ENCODE measurements at regions of chr2 and their contacts with region 1.

Region 1: DNA sequence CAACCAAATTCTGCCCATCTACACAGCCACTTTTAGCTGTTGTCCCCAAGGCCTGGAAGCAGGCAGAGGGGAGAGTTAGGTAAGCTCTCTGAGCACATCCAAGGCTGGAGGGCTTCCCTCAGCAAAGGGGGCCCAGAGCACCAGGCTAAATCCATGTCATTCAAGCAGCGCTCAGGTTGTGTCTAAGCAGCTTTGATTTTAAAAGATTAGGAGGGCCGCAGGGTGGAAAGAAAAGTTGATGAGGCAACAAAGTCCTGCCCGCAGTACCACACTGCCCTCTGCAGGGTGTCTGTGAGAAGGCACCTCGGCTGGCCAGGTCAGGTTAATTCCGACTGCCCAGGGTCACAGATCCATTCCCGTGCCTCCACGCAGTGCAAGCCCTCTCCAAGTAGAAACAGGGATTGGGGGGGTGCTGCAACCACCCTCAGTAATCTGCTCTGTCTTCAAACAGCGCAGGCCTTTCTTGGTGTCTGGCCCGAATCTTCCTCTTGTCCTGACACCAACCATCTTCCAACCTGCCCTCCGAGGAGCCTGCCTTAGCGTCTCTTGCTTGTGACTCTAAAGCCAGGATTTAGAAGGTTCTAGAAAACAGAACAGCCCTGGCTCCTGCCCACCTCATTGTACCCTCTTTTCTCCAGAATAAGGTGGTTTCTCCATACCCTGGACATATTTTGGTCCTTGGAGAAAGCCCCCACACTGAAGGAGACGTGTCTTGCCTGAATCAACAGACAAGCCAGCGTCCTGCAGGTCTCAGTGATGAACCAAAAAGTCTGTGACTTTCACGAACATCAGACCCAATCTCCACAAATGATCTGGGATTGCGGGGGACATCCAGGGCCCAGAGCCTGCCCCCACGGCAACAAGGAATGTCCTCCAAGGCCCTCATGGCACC is 289.2 kb downstream of the TNS1 start:
- DNase-seq: peak; percentile 42 to 76 (median 60)
- ATAC-seq: peak; percentile 80
- H3K4me3 ChIP-seq: no peak overlapping the region
- H3K4me3 Mint-ChIP-seq: no peak overlapping the region
- H3K27ac ChIP-seq: no peak overlapping the region
- H3K27ac Mint-ChIP-seq: no peak overlapping the region
- H3K4me1 ChIP-seq: peaks cover 11% of the 10 kb centered on the region
- H3K4me1 Mint-ChIP-seq: peaks cover 6% of the 10 kb centered on the region
- H3K27me3 ChIP-seq: no peaks in the 10 kb centered on the region
- H3K27me3 Mint-ChIP-seq: no peaks in the 10 kb centered on the region
- CTCF ChIP-seq: peak; percentile 98

Region 2: DNA sequence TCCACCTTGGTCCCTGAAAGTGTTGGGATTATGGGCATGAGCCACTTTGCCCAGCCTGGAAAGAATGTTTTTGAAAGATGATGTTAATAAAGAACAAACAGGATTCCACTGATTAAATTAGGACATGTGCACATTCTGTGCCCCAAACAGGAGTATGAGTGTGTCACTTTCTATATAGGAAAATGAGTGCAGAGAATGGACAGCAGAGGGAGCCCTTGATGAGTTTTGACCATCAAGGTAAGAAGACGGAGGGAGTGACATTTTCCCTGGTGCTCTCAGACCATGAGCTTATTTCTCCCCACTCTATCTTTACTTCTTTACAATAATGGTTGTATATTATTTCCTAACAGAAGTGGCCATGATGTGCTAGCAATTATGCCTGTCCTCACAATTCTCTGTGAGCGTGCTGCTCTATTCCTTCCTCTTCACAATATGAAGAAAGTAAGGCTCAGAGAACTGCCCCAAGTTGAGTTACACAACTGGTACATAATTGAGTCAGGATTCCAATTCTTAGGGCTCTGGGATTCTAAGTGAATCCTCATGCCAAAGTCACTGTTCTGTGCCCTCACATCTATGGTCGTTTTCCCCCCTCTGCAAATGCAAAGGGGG is 1194.4 kb before region 1 on chr2:
- CTCF ChIA-PET with region 1: interaction called, 4 read pairs
- POLR2A ChIA-PET with region 1: no interaction called
- intact Hi-C with region 1: loop called (anchors 1 to 5 kb)
- DNase-seq: peak in 9 of 14 experiments; percentile 5 to 70 (median 28)
- ATAC-seq: no peak
- H3K4me3 ChIP-seq: no peak overlapping the region
- H3K4me3 Mint-ChIP-seq: no peak overlapping the region
- H3K27ac ChIP-seq: no peak overlapping the region
- H3K27ac Mint-ChIP-seq: no peak overlapping the region
- H3K4me1 ChIP-seq: no peaks in the 10 kb centered on the region
- H3K4me1 Mint-ChIP-seq: no peaks in the 10 kb centered on the region
- H3K27me3 ChIP-seq: no peaks in the 10 kb centered on the region
- H3K27me3 Mint-ChIP-seq: no peaks in the 10 kb centered on the region
- CTCF ChIP-seq: peak; percentile 70

Region 3: DNA sequence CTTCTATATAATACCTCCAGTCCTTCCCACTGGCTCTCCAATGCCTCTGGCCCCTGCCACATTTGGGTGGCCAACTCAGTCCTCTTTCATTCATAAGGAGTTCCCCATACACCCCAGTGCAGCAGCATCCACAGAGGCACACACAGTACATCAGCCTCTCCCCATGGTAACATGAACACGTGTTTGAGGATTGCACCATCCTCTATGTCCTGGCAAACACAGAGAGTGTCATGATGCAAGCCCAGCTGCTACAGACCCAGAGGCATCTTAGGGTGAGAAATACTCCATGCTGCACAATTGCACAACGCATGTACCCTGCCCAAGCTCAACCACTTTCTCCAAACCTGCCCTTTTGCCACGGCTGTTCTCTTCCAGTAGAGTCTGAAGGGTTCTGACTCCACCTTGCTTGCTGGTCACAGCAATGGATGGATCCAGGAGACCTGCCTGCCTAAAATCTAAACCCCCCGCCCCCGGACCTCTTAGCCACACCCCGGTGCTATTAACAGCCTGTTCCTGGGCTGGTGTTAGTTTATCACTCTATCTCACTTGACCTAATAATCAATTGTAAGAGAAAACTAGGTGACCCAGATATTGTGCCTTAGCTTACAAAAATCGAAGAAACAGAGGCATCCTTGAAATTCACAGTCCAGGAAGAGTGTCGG is 1029.7 kb before region 1 on chr2:
- CTCF ChIA-PET with region 1: interaction called, 4 read pairs
- POLR2A ChIA-PET with region 1: no interaction called
- intact Hi-C with region 1: loop called (anchors 1 kb)
- DNase-seq: peak in 2 of 14 experiments; percentile 38 to 45
- ATAC-seq: no peak
- H3K4me3 ChIP-seq: no peak overlapping the region
- H3K4me3 Mint-ChIP-seq: no peak overlapping the region
- H3K27ac ChIP-seq: no peak overlapping the region
- H3K27ac Mint-ChIP-seq: no peak overlapping the region
- H3K4me1 ChIP-seq: no peaks in the 10 kb centered on the region
- H3K4me1 Mint-ChIP-seq: no peaks in the 10 kb centered on the region
- H3K27me3 ChIP-seq: peaks cover 8 to 25% of the 10 kb centered on the region in 2 experiments
- H3K27me3 Mint-ChIP-seq: peaks cover 58% of the 10 kb centered on the region
- CTCF ChIP-seq: no peak

Region 4: GRCh38 chr2:216698895-216699294 is 1014.7 kb before region 1 on chr2:
- CTCF ChIA-PET with region 1: interaction called, 3 read pairs
- POLR2A ChIA-PET with region 1: interaction called, 3 read pairs
- intact Hi-C with region 1: loop called (anchors 5 kb)
- DNase-seq: peak in 3 of 14 experiments; percentile 13 to 49 (median 38)
- ATAC-seq: peak; percentile 64
- H3K4me3 ChIP-seq: no peak overlapping the region
- H3K4me3 Mint-ChIP-seq: no peak overlapping the region
- H3K27ac ChIP-seq: no peak overlapping the region
- H3K27ac Mint-ChIP-seq: no peak overlapping the region
- H3K4me1 ChIP-seq: peaks cover 10% of the 10 kb centered on the region
- H3K4me1 Mint-ChIP-seq: peaks cover 8% of the 10 kb centered on the region
- H3K27me3 ChIP-seq: peaks cover 28 to 39% of the 10 kb centered on the region in 2 experiments
- H3K27me3 Mint-ChIP-seq: peaks cover 16% of the 10 kb centered on the region
- CTCF ChIP-seq: peak; percentile 26

Region 5: GRCh38 chr2:217040099-217040498 is 673.5 kb before region 1 on chr2:
- CTCF ChIA-PET with region 1: no interaction called
- POLR2A ChIA-PET with region 1: no interaction called
- intact Hi-C with region 1: loop called in 1 of 2 experiments (anchors 5 kb)
- DNase-seq: no peak
- ATAC-seq: no peak
- H3K4me3 ChIP-seq: no peak overlapping the region
- H3K4me3 Mint-ChIP-seq: no peak overlapping the region
- H3K27ac ChIP-seq: no peak overlapping the region
- H3K27ac Mint-ChIP-seq: no peak overlapping the region
- H3K4me1 ChIP-seq: no peaks in the 10 kb centered on the region
- H3K4me1 Mint-ChIP-seq: no peaks in the 10 kb centered on the region
- H3K27me3 ChIP-seq: no peaks in the 10 kb centered on the region
- H3K27me3 Mint-ChIP-seq: no peaks in the 10 kb centered on the region
- CTCF ChIP-seq: no peak

Measured in CD4-positive, alpha-beta T cell (primary cell).